Right ventricle myocardium inferior (tissue), 1 donor: ENCODE measurements at regions of chr19 and their contacts with region 1.

Region 1: DNA sequence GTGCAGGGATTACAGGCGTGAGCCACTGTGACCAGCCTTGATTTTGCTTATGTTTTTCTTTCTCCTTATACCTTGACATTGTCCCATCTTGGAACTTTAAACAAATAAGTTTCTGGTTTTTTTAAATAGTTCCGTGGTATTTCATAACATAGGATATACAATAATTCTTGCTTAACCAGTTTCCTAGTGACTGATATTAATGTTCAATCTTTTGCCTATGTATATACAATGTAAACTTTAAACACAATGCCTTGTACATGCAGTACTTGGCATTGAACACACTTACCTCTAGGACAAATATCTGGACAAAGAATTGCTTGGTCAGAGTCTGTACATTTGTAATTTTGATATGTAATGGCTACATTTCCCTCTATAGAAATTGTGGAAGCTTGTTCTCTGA is 24.4 kb upstream of the SPACA4 start:
- DNase-seq: no peak
- ATAC-seq: no peak

Region 2: GRCh38 chr19:48506138-48506733 is 75.9 kb before region 1 on chr19:
- intact Hi-C with region 1: loop called (anchors 5 kb)
- DNase-seq: peak; percentile 4
- ATAC-seq: no peak

Region 3: DNA sequence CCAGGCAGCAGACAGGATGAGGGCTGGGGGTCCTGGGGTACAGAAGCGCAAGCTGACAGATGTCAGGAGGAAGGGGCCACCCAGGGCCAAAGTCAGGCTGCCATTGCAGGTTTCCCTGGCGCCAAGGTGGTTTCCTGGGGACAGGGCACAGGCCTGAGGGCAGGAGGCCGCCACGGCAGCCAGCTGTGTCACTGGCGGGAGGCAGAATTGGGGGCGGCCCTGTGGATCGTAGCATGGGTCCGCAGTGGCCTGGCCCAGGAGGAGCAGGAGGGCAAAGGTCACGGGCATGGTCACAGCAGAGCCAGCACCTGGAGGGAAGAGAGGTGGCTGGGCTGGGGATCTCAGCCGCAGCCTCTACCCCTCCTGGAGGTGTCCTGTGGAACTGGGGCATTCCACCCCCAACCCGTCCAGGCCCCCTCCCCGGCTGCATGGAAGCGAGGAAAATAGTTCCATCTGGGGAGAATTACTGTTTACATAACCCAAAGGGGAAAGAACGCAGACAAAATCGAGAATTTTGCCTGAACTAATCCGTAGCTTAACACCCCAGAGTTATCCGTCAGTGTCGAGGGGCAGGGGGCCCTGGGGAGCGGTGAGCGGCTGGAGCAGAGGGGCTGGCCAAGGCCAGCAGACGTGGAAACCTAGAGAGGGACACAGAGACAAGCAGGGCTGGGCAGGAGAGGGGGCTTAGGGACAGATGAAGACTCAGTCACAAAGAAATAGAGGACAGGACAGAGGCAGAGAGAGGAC is 88.7 kb after region 1 on chr19:
- intact Hi-C with region 1: no loop called
- DNase-seq: no peak
- ATAC-seq: no peak